WTC11 (cell line): ENCODE measurements at regions of chr7 and their contacts with region 1.

Region 1: DNA sequence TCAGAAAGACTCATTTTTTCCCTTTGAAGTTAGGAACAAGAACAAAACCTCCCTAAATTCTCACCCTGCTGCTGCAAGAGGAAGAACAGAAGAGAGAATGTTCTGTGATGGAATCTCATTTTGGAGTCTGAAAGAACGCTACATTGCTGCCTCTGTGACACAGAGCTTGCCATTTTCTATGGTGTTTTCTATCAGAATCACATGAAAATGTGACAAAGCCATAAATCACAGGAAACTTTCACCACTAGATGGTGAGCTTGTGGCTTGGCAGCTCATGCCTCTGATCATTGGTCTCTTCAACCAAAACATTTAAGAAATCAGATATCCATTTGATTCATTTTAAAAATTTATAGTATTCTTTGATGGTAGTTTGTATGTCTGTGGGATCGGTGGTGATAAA is 82.9 kb downstream of the CADPS2 start:
- DNase-seq: no peak
- ATAC-seq: peak; percentile 56
- H3K4me3 Mint-ChIP-seq: no peak overlapping the region
- H3K27ac Mint-ChIP-seq: peak overlapping the region; percentile 63
- H3K4me1 Mint-ChIP-seq: peaks cover 36% of the 10 kb centered on the region
- H3K27me3 Mint-ChIP-seq: no peaks in the 10 kb centered on the region
- CTCF ChIP-seq: no peak

Region 2: DNA sequence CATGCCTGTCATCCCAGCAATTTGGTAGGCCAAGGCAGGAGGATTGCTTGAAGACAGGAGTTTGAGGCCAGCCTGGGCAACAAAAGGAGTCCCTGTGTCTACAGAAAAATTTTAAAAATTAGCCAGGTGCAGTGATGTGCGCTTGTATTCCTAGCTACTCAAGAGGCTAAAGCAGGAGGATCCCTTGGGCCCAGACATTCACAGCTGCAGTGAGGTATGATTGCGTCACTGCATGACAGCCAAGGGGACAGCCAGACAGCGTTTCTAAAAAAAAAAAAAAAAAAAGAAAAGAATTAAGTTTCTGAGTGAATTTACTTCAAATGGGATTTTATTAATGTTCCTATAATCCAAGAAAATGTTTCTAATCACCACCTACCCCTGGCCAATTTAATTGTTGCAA is 13.2 kb before region 1 on chr7:
- CTCF ChIA-PET with region 1: interaction called, 22 read pairs
- POLR2A ChIA-PET with region 1: interaction called, 3 read pairs
- DNase-seq: no peak
- ATAC-seq: no peak
- H3K4me3 Mint-ChIP-seq: no peak overlapping the region
- H3K27ac Mint-ChIP-seq: no peak overlapping the region
- H3K4me1 Mint-ChIP-seq: peaks cover 65% of the 10 kb centered on the region
- H3K27me3 Mint-ChIP-seq: no peaks in the 10 kb centered on the region
- CTCF ChIP-seq: no peak

Region 3: GRCh38 chr7:122813845-122814244 is 10.5 kb after region 1 on chr7:
- CTCF ChIA-PET with region 1: interaction called, 17 read pairs
- POLR2A ChIA-PET with region 1: no interaction called
- DNase-seq: no peak
- ATAC-seq: no peak
- H3K4me3 Mint-ChIP-seq: no peak overlapping the region
- H3K27ac Mint-ChIP-seq: no peak overlapping the region
- H3K4me1 Mint-ChIP-seq: peaks cover 4% of the 10 kb centered on the region; the same call in 1 of the 2 replicates
- H3K27me3 Mint-ChIP-seq: no peaks in the 10 kb centered on the region
- CTCF ChIP-seq: no peak

Region 4: GRCh38 chr7:122886357-122887081 is 83.2 kb after region 1 on chr7 and contains the start of gene CADPS2:
- CTCF ChIA-PET with region 1: interaction called, 41 read pairs
- POLR2A ChIA-PET with region 1: no interaction called
- DNase-seq: peak; percentile 85
- ATAC-seq: peak; percentile 79
- H3K4me3 Mint-ChIP-seq: peak within 1 kb of the TSS; percentile 90
- H3K27ac Mint-ChIP-seq: no peak within 1 kb of the TSS
- H3K4me1 Mint-ChIP-seq: peaks cover 39% of the 10 kb centered on the region
- H3K27me3 Mint-ChIP-seq: peaks cover 37% of the 10 kb centered on the region
- CTCF ChIP-seq: no peak
- total RNA-seq, gene CADPS2: 10.2 to 12.2 TPM (median 11.5 TPM) in 3 replicates

Region 5: GRCh38 chr7:123154231-123154860 is 351.0 kb after region 1 on chr7:
- CTCF ChIA-PET with region 1: interaction called, 17 read pairs
- POLR2A ChIA-PET with region 1: no interaction called
- DNase-seq: peak; percentile 77
- ATAC-seq: peak; percentile 83
- H3K4me3 Mint-ChIP-seq: no peak overlapping the region
- H3K27ac Mint-ChIP-seq: no peak overlapping the region
- H3K4me1 Mint-ChIP-seq: no peaks in the 10 kb centered on the region
- H3K27me3 Mint-ChIP-seq: no peaks in the 10 kb centered on the region
- CTCF ChIP-seq: peak; percentile 75